ENCODE measurements at regions of chr1 and their contacts with region 1.

Region 1: GRCh38 chr1:224851210-224851847 is 78.1 kb upstream of the DNAH14 start:
- DNase-seq: peak; percentile 62 to 73
- H3K4me3 ChIP-seq: no peak overlapping the region
- H3K27ac ChIP-seq: no peak overlapping the region
- H3K4me1 ChIP-seq: no peaks in the 10 kb centered on the region
- H3K27me3 ChIP-seq: no peaks in the 10 kb centered on the region
- CTCF ChIP-seq: peak; percentile 25 to 58 (median 38)
- POLR2A ChIP-seq: no peak

Region 2: GRCh38 chr1:224380003-224380402 is 471.3 kb before region 1 on chr1:
- intact Hi-C with region 1: no loop called
- DNase-seq: no peak
- H3K4me3 ChIP-seq: no peak overlapping the region
- H3K27ac ChIP-seq: no peak overlapping the region
- H3K4me1 ChIP-seq: no peaks in the 10 kb centered on the region
- H3K27me3 ChIP-seq: no peaks in the 10 kb centered on the region
- CTCF ChIP-seq: no peak
- POLR2A ChIP-seq: no peak

Region 3: GRCh38 chr1:224513787-224514209 is 337.5 kb before region 1 on chr1:
- intact Hi-C with region 1: loop called (anchors 5 kb)
- DNase-seq: peak; percentile 82 to 92
- H3K4me3 ChIP-seq: no peak overlapping the region
- H3K27ac ChIP-seq: no peak overlapping the region
- H3K4me1 ChIP-seq: peaks cover 0 to 3% of the 10 kb centered on the region in 2 donors
- H3K27me3 ChIP-seq: no peaks in the 10 kb centered on the region
- CTCF ChIP-seq: peak; percentile 54 to 92 (median 92)
- POLR2A ChIP-seq: no peak

Region 4: DNA sequence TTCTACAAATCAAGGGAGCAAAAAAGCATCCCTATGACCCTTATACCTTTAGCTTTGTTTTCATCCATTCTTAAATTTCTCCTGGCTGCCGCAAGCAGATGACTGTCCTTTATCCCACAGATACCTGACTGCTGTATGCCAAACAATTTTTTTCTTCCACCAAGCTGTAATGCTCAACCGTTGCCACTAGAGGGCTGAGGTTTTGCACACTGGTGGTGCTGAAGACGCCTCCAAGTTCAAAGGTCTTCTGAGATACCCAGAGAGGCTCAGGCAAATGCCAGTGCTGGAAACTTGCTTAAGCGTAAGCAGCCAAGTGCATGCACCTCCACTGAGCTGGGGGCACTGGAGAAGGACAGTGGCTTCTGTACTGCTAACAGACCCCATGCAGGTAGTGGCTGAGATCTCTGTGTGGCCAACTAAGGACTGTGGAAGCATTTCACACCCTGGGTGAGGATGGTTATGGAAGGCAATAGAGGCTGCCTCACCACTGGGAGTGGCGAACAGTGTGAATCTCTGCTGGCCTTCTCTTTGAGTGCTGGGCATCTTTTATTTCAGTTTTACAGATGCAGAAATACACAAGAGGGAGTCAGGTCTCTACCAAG is 206.7 kb before region 1 on chr1:
- intact Hi-C with region 1: loop called (anchors 5 kb)
- DNase-seq: peak; percentile 26 to 39
- H3K4me3 ChIP-seq: no peak overlapping the region
- H3K27ac ChIP-seq: no peak overlapping the region
- H3K4me1 ChIP-seq: no peaks in the 10 kb centered on the region
- H3K27me3 ChIP-seq: no peaks in the 10 kb centered on the region
- CTCF ChIP-seq: peak; percentile 52 to 85 (median 76)
- POLR2A ChIP-seq: no peak

Region 5: DNA sequence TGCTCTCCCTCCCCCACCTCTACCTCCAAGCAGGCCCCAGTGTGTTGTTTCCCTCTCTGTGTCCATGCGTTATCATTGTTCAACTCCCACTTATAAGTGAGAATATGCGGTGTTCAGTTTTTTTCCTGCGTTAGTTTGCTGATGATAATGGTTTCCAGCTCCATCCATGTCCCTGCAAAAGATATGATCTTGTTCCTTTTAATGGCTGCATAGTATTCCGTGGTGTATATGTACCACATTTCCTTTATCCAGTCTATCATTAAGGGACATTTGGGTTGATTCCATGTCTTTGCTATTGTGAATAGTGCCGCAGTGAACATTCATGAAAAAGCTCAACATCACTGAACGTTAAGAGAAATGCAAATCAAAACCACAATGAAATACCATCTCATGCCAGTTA is 136.7 kb after region 1 on chr1:
- intact Hi-C with region 1: no loop called
- DNase-seq: no peak
- H3K4me3 ChIP-seq: no peak overlapping the region
- H3K27ac ChIP-seq: no peak overlapping the region
- H3K4me1 ChIP-seq: no peaks in the 10 kb centered on the region
- H3K27me3 ChIP-seq: no peaks in the 10 kb centered on the region
- CTCF ChIP-seq: no peak
- POLR2A ChIP-seq: no peak